Keratinocyte (primary cell): ENCODE measurements at regions of chr5 and their contacts with region 1.

Region 1: GRCh38 chr5:112210430-112211005 is 208.6 kb downstream of the EPB41L4A start:
- DNase-seq: no peak
- H3K4me3 ChIP-seq: no peak overlapping the region
- H3K27ac ChIP-seq: no peak overlapping the region
- H3K4me1 ChIP-seq: no peaks in the 10 kb centered on the region
- H3K27me3 ChIP-seq: no peaks in the 10 kb centered on the region
- CTCF ChIP-seq: peak; percentile 55 to 62 (median 61)

Region 2: DNA sequence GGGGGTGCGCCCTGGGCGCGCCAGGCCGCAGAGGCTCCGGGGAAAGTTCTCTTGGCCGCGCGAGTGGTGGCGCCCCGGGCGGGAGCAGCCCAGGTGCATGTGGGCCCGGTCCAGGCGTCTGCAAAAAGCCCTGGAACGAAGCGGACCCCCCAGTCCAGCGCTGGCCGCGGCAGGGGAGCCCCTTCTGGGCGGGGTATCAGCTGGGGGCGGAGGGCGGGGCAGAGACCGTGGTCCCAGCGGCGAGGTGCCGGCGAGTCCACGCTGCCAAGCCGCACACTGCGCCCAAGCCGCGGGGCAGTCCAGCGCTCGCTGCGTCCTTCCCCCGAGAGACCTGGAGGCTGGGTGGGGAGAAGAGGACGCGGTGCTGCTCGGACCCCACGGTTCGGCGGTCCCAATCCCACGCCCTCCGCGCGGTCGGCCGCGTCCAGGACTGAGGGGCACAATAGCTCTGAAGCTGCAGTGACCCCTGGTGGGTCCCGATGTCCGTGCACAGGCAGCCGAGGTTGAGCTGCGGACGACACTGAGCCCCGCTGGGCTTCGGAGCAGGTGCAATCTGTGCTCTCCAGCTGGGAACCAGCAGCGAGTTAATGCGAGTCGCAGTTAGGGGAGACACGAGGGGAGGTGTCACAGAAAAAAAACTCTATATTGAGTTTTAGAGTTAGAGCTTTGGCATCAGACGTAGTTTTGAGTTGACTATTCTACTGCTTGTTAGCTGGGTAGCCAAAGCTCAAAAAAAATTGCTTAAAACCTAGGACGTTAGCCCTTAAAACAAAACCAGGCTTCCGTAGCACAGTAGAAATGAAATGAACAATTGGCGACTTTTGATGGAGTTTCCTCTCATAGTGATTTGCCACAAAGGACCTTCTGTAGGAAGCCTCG is 209.7 kb after region 1 on chr5:
- dilution Hi-C with region 1: loop called (anchors 25 kb)
- DNase-seq: no peak
- H3K4me3 ChIP-seq: peak overlapping the region; percentile 73 to 84 (median 73)
- H3K27ac ChIP-seq: no peak overlapping the region
- H3K4me1 ChIP-seq: peaks cover 4% of the 10 kb centered on the region
- H3K27me3 ChIP-seq: no peaks in the 10 kb centered on the region
- CTCF ChIP-seq: peak; percentile 70 to 93 (median 90)